AG04449 (cell line): ENCODE measurements at regions of chr2 and their contacts with region 1.

Region 1: DNA sequence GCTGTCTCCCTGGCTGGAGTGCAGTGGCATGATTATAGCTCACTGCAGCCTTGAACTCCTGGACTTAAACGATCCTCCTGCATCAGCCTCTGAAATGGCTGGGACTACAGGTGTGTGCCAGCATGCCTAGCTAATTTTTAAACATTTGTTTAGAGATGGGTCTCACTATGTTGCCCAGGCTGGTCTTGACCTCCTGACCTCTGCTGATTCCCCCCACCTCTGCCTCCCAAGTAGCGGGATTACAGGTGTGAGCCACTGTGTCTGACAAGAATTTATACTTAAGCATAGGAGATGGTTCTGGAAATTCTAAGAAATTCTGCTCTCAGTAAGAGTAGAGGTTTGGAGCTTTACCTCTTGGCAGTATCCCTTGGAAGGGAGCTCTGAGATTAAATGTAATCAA is 18.2 kb downstream of the MTHFD2 start:
- DNase-seq: no peak
- H3K4me3 ChIP-seq: no peak overlapping the region
- CTCF ChIP-seq: no peak

Region 2: GRCh38 chr2:74206180-74206688 is 10.4 kb before region 1 on chr2:
- CTCF ChIA-PET with region 1: interaction called, 20 read pairs
- POLR2A ChIA-PET with region 1: interaction called, 3 read pairs
- DNase-seq: no peak
- H3K4me3 ChIP-seq: no peak overlapping the region
- CTCF ChIP-seq: no peak